Posterior vena cava (tissue), 2 donors: ENCODE measurements at regions of chr5 and their contacts with region 1.

Region 1: DNA sequence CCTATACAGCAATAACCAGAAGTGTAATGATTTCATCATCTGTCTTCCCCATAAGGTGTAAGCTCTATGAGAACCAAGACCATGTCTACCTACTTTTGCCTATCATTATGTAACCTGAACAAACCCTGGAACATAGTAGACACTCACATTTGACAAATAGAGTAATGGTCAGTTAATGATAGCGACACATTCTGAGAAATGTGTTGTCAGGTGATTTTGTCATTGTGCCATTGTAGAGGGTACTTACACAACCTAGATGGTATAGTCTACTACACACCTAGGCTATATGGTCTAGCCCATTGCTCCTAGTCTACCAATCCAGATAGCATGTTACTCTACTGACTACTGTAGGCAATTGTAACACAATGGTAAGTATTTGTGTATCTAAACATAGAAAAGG is 22.3 kb upstream of the WDR41 start:
- DNase-seq: no peak

Region 2: DNA sequence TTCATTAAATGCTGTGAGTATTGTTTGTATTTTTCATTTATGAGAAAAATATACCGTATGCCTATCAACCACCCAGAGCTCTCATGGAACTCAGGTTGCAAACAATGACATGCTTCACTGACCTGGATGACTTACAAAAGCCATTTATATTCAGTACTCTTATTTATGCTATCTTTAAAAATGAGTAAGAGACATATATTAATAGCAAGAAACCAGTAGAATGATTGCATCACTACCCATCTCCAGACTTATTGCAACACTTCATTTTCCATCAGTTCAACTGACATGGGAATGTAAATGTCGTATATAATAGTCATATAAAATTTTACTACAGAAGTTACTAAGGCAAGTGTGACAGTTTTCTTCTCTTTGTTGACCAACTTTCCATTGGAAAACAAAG is 55.0 kb after region 1 on chr5:
- intact Hi-C with region 1: loop called in 1 of 2 experiments (anchors 2 kb)
- DNase-seq: no peak

Region 3: GRCh38 chr5:77785229-77785628 is 270.8 kb after region 1 on chr5:
- intact Hi-C with region 1: no loop called
- DNase-seq: no peak